ENCODE measurements at regions of chr6 and their contacts with region 1.

Region 1: GRCh38 chr6:2931970-2932748 is 29.1 kb upstream of the SERPINB9 start:
- DNase-seq: peak; percentile 92
- ATAC-seq: peak; percentile 88
- H3K4me3 Mint-ChIP-seq: no peak overlapping the region
- H3K27ac Mint-ChIP-seq: peak overlapping the region; percentile 67
- H3K4me1 Mint-ChIP-seq: peaks cover 30% of the 10 kb centered on the region
- H3K27me3 Mint-ChIP-seq: no peaks in the 10 kb centered on the region

Region 2: DNA sequence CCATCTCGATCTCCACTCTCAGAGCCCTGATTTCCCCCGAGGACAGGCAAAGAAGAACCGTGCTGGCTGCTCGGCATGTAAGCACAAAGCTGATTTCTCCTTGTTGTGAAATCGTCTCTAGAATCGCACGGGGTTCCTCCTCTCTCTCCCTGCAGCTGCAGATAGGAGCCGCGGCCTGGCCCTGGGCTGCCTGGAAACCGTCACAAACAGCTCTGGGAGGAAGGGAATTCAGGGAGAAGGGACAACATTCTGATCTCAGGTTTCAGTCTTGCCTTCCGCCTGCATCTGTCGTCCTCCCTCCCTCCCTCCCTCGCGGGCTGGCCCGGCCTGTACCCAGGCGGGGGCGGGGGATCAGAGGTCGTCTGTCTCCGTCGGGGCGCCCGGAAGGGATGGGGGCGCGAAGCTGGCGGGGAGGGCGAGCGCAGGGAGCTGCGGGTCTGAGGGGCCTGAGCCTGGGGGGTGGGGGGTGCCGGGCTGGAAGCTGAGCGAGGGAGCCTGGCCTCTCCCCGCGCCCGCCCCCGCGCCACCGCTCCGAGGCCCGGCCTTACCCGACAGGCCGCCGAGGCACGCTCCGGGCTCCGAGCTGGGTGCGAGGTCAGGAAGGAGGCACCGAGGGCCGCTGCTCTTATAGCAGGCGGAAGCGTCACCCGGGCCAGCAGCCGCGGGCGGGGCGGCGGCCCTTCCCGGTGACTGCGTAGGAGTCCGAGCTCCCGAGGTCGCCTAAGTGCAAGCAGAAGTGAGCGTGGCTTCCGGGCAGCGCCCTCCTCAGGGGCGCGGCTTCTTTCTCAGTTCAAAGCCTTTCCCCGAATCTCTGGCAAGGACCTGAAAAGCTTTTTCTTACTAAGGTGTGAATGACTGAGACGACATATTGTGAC is 90.7 kb before region 1 on chr6 and contains the start of gene SERPINB1:
- CTCF ChIA-PET with region 1: interaction called, 165 read pairs
- POLR2A ChIA-PET with region 1: interaction called, 64 read pairs
- intact Hi-C with region 1: loop called (anchors 1 kb)
- DNase-seq: peak; percentile 96
- ATAC-seq: peak; percentile 86
- H3K4me3 Mint-ChIP-seq: peak within 1 kb of the TSS; percentile 96
- H3K27ac Mint-ChIP-seq: peak within 1 kb of the TSS; percentile 91
- H3K4me1 Mint-ChIP-seq: peaks cover 67% of the 10 kb centered on the region
- H3K27me3 Mint-ChIP-seq: no peaks in the 10 kb centered on the region
- total RNA-seq, gene SERPINB1: 200 to 243 TPM

Region 3: DNA sequence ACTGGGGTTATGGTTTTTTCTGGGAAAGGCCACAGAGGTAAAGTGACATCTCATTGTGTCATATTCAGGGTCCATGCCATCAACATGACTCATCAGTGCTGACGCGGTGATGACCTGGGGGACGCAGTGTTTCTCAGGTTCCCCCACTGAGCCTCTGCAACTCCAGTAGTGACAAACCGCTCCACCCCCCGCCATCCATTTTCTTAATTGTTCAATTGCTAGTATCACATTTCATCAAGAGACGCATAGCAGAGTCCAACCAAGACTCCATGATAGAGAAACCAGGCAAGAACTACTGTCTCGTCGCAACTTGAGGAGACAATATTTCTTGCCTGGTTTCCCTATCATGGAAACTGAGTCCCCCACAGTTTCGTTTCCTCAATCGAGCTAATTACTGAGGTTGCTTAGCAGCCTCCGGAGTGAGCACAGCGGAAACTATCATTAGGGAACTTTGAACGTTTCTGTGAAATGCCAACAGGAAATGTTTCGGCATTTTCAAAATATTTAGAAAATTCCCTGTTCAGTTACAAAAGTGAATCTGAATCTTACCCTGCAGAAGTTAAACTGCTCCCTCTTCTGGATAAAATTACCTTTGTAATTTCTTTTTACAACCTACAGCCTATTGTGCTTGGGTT is 78.3 kb before region 1 on chr6:
- CTCF ChIA-PET with region 1: interaction called, 7 read pairs
- POLR2A ChIA-PET with region 1: interaction called, 19 read pairs
- intact Hi-C with region 1: no loop called
- DNase-seq: peak; percentile 94
- ATAC-seq: peak; percentile 57
- H3K4me3 Mint-ChIP-seq: peak overlapping the region; percentile 62
- H3K27ac Mint-ChIP-seq: peak overlapping the region; percentile 100
- H3K4me1 Mint-ChIP-seq: peaks cover 66% of the 10 kb centered on the region
- H3K27me3 Mint-ChIP-seq: no peaks in the 10 kb centered on the region

Region 4: GRCh38 chr6:2870056-2870674 is 62.0 kb before region 1 on chr6:
- CTCF ChIA-PET with region 1: interaction called, 9 read pairs
- POLR2A ChIA-PET with region 1: interaction called, 30 read pairs
- intact Hi-C with region 1: no loop called
- DNase-seq: no peak
- ATAC-seq: no peak
- H3K4me3 Mint-ChIP-seq: no peak overlapping the region
- H3K27ac Mint-ChIP-seq: no peak overlapping the region
- H3K4me1 Mint-ChIP-seq: peaks cover 69% of the 10 kb centered on the region
- H3K27me3 Mint-ChIP-seq: no peaks in the 10 kb centered on the region

Region 5: DNA sequence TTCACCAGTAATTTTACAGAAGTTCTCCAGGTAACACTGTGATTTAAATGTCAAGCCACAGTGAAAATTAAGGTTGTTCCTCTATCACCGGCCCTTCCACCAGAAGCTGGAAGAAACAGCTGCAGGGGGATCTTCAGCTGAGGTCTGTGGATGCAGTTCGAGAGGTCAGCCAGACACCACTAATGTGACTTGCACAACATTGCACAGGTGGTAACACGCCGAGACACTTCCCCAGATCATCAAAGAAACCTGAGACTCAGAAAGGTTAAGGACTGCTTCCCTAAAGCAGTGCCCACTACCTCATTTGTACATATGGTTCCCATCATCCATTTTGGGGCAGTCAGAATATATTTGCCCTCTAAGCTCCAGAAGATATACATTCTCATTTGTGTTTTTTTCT is 21.0 kb before region 1 on chr6:
- CTCF ChIA-PET with region 1: interaction called, 19 read pairs
- POLR2A ChIA-PET with region 1: interaction called, 7 read pairs
- intact Hi-C with region 1: loop called in 1 of 2 experiments (anchors 2 kb)
- DNase-seq: no peak
- ATAC-seq: no peak
- H3K4me3 Mint-ChIP-seq: no peak overlapping the region
- H3K27ac Mint-ChIP-seq: peak overlapping the region; percentile 52
- H3K4me1 Mint-ChIP-seq: peaks cover 45% of the 10 kb centered on the region
- H3K27me3 Mint-ChIP-seq: peaks cover 2% of the 10 kb centered on the region